ENCODE measurements at regions of chr2 and their contacts with region 1.

Region 1: DNA sequence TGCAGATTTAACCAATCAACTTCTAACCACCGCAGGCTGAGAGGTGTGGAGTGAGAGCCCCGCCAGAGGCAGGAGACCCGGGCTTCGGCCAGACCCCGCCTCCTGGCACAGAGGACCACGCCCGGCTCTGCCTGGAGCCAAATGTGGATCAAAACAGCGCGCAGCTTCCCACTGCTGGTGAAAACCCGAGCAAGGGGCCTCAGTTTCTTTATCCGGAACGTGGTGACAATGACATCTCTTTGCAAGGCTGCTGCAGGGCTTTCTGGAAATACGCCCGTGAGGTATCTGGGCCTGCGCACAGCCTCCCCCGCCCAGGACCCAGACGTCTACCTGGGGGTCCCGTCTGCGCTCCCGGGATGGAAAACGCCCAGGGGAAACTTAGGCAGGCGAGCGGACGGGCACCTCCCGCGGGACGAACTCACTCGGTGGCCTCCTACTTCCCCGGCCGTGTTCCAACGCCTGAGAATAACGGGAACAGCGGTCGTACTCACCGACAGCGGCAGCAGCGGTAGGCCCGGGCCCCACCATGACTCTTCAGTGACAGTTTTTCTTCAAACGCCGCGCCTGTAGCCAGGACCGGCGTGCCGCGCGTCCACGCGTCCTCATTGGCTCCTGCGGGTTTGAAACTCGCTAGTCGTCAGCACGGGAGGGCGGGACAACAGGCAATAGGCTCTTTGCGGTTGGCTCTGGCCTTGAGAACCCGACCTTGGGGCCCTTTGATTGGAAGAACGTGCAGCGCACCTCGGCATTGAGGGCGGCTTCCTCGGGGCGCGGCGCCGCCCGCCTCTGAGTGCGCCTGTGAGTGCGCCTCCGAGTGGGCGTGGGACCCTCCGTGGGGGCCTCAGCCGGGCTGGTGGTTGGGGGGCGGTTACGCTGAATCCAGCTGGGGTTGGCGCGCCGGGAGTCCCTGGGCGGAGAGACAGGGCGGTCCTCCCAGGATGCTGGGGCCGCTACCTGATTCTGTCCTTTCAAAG is at the start of gene CKAP2L:
- DNase-seq: peak; percentile 100
- H3K4me3 ChIP-seq: peak within 1 kb of the TSS; percentile 84
- H3K27ac ChIP-seq: peak within 1 kb of the TSS; percentile 72
- H3K4me1 ChIP-seq: peaks cover 10% of the 10 kb centered on the region
- H3K27me3 ChIP-seq: no peaks in the 10 kb centered on the region
- CTCF ChIP-seq: no peak
- total RNA-seq, gene CKAP2L: 48.1 and 49.6 TPM in 2 replicates

Region 2: DNA sequence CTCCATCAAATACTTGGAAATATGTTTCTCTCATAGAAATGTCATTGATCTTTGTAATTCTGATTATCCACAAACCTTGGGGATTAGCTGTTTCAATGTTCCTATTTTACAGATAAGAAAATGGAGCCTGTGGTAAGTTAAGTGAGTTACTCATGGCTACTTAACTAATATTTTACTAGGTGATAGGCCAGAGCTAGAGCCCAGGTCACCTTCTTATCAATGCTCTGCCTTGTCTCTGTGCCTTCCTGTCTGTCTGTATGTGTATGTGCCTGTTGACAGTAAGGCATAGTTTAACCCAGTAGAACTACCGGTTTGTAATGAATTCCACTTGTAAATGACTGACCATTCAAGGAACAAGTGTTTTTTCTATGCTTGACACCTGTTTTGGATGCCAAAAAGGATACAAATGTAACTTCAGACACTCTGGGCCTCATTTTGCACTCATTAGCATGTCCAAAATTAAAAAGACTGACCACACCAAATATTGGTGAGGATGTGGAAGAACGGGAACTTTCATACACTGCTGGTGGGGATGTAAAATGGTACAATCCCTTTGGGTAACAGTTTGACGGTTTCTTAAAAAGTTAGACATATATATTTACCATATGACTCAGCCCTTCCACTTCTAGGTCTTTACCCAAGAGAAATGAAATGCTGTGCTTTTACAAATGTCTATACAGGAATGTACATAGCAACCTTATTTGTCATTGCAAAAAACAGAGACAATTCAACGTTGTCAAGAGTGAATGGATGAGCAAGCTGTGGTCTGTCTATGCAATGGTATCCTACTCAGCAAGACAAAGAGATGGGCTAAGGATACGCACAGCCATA is 39.5 kb after region 1 on chr2:
- CTCF ChIA-PET with region 1: no interaction called
- POLR2A ChIA-PET with region 1: no interaction called
- intact Hi-C with region 1: loop called (anchors 2 kb)
- DNase-seq: no peak
- H3K4me3 ChIP-seq: no peak overlapping the region
- H3K27ac ChIP-seq: no peak overlapping the region
- H3K4me1 ChIP-seq: no peaks in the 10 kb centered on the region
- H3K27me3 ChIP-seq: no peaks in the 10 kb centered on the region
- CTCF ChIP-seq: no peak

Region 3: GRCh38 chr2:113068718-113069435 is 304.5 kb after region 1 on chr2:
- CTCF ChIA-PET with region 1: no interaction called
- POLR2A ChIA-PET with region 1: no interaction called
- intact Hi-C with region 1: no loop called
- DNase-seq: no peak
- H3K4me3 ChIP-seq: no peak overlapping the region
- H3K27ac ChIP-seq: no peak overlapping the region
- H3K4me1 ChIP-seq: no peaks in the 10 kb centered on the region
- H3K27me3 ChIP-seq: peaks cover under 1% of the 10 kb centered on the region
- CTCF ChIP-seq: no peak

Measured in A673 (cell line).